ENCODE measurements at regions of chr5 and their contacts with region 1.

Region 1: DNA sequence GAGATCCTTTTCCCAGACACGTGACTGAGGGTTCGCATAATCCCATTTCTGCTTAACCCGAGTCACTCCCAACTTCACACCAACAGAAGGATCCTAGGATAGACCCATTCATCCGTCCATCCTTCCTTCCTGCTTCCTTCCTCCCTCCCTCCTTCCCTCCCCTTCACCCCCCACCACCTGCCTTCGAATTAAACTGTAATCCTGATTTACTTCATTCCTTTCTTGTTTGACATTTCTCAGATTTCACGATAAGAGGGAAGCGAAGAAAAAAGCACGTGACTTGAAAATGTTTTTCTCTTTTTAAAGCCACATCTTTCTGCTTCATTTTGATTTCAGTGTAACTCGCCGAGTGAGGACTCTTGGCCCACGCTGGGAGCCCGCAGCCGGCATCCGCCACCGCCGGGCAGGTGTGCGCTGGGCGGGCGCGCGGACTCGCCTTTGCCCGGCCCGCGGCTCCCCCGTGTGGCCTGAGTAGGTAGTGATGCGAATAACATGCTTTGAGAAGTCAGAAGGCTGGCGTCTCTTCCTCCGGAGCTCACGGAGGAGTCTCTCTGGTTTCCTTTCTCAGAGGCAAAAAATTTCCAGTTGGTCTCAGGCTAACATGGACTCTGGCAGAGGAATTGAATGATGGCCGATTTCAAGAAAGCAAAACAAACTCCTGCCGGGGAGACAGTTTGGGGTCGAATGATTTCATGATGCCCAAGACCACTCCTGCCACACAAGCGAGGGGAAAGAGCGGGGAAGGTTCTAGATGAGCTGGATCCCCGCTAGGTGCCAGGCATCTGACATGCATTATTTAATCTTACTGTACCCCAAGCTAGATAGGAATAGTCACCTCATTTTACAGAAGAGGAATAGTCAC is 117.7 kb downstream of the SLC12A2 start:
- ATAC-seq: peak; percentile 85 to 96 (median 90)
- H3K4me3 ChIP-seq: peak overlapping the region in 2 of 5 donors; percentile 12 to 21
- H3K27ac ChIP-seq: no peak overlapping the region
- H3K4me1 ChIP-seq: no peaks in the 10 kb centered on the region

Region 2: DNA sequence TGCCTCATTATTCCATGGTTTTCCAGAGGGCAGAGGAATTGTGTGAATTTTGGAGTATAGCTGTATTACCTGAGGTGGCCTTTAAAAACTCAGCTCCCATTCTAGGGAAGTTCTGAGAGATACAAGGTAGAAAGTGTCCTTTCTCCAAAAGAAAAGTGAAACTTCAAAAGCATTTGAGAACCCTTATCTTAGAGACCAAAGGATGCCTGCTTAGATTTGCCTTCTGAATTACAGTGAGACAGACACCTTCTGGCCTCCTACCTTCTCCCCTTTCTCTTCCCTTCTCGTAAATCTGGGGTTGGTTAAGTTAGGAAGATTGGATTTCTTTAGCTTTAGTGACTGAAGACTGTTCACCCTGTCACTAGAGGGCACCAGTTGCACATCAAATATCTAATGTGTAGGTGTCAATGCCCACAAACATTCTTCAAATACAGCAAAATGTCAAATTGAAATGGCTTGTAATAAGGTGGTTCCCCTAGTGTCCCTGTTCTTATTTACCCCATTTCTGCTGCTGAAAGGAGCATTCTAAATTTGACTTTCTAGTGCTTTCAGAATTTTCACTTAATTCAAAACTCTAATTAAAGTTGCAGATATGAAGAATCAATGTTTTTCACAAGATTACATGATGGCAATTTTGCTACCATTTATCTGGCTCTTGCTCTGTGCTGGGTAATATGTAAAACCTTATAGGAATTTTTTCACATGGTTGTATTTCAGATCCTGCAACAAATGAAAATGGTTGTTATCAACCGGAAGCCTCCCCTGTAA is 637.1 kb before region 1 on chr5:
- in situ Hi-C with region 1: loop called in 7 of 9 experiments (anchors 10 to 25 kb)
- ATAC-seq: peak; percentile 60 to 83 (median 74)
- H3K4me3 ChIP-seq: no peak overlapping the region
- H3K27ac ChIP-seq: no peak overlapping the region
- H3K4me1 ChIP-seq: peaks cover 3% of the 10 kb centered on the region in 2 donors

Region 3: DNA sequence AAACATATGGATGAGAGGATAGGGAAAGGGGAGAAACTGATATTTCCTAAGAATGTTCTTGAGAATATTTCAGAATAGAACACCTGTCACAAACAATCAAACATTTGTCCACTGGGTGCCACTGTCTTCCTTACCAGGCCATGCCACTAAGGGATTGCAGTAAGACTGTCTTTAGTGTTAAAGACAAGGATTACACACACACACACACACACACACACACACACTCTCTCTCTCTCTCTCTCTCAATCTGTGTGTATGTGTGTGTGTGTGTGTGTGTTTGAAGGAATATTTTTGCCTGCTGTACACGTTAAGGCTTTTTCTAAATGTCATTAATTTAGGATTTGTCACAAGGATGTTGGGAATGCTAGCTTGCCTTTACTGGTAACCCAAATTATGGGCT is 443.7 kb before region 1 on chr5:
- in situ Hi-C with region 1: loop called in 1 of 9 experiments (anchors 10 kb)
- ATAC-seq: peak; percentile 43 to 89 (median 78)
- H3K4me3 ChIP-seq: no peak overlapping the region
- H3K27ac ChIP-seq: no peak overlapping the region
- H3K4me1 ChIP-seq: peaks cover 6 to 11% of the 10 kb centered on the region in 2 donors

Region 4: DNA sequence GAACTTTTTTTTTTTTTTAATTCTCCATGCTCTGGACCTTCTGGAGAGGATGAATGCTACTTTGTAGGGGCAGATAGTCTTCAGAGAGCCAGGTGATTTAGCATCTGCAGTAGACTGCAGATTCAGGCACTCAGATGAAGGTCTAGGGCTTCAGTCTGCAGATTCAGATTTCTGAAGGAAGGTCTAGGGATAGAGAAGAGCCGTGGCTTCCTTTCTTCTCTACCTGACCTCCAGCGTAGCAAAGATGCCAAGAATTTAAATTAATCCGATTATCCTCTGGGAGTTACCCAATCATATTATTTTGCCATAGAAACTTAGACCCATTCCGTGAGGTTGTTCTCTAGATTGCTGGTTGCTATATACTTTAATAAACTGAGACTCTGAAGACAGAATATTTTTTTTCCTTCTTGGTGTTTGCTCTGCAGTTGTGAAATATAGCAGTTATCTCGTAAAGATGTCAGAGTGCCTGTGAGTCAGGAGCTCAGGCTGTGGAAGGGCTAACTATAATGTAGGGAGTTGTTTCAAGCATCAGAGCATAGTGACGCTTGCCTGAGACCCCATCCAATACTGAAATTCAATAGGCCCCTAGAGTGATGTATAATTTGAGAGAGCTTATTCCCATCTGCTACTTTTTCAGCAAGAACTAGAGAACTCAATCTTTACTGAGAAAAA is 250.4 kb before region 1 on chr5:
- in situ Hi-C with region 1: no loop called
- ATAC-seq: peak in 2 of 8 experiments; percentile 39 to 70
- H3K4me3 ChIP-seq: no peak overlapping the region
- H3K27ac ChIP-seq: no peak overlapping the region
- H3K4me1 ChIP-seq: peaks cover 0 to 8% of the 10 kb centered on the region in 2 donors

Region 5: GRCh38 chr5:128014578-128014977 is 186.7 kb before region 1 on chr5:
- in situ Hi-C with region 1: no loop called
- ATAC-seq: no peak
- H3K4me3 ChIP-seq: no peak overlapping the region
- H3K27ac ChIP-seq: no peak overlapping the region
- H3K4me1 ChIP-seq: peaks cover 3 to 6% of the 10 kb centered on the region in 2 donors

Region 6: GRCh38 chr5:128674825-128675446 is 473.6 kb after region 1 on chr5:
- in situ Hi-C with region 1: loop called in 1 of 9 experiments (anchors 25 kb)
- ATAC-seq: peak in 3 of 8 experiments; percentile 63 to 75 (median 67)
- H3K4me3 ChIP-seq: no peak overlapping the region
- H3K27ac ChIP-seq: no peak overlapping the region
- H3K4me1 ChIP-seq: no peaks in the 10 kb centered on the region

Region 7: GRCh38 chr5:129767906-129768380 is 1566.6 kb after region 1 on chr5:
- in situ Hi-C with region 1: loop called in 3 of 9 experiments (anchors 25 kb)
- ATAC-seq: peak; percentile 91 to 98 (median 95)
- H3K4me3 ChIP-seq: no peak overlapping the region
- H3K27ac ChIP-seq: no peak overlapping the region
- H3K4me1 ChIP-seq: no peaks in the 10 kb centered on the region